ENCODE measurements at regions of chr11 and their contacts with region 1.

Region 1: GRCh38 chr11:6057452-6057851 is 26.9 kb upstream of the OR56A1 start:
- DNase-seq: no peak

Region 2: DNA sequence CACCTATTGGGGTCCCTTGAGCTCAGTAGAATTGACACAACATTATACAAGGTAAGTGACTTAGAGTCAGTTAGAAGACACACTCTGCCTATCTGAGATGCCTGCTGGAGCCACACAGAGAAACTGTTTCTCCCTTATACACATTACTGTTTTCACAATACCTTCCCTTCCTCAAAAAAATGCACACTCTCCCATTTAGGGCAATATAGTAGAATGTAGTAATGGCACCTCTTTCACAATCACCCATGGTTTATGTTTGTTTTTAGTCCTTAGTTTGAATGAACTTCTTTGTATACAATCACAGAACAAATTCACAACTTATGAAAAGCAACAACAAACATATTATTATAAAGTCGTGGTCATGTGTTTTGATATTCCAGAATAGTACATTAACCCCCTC is 523.4 kb before region 1 on chr11:
- intact Hi-C with region 1: no loop called
- DNase-seq: no peak

Region 3: DNA sequence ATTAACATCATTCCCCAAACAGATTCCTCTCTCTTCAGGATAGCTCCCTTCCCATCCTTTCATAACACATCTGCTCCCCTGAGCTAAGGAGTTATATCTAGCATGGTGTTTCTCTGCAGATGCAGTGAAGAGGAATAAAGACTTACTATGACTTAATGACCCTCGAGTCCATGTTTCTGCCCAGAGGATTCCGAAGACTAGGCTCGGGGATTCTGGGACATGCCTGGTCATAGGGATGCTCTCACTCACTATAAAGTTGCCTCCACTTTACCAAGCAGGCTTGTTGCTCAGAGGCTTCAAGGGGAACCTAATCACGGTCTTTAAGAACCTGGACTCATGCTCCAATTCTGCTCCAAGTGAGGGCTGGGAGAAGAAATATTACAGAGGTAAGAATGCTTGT is 177.1 kb before region 1 on chr11 and contains the start of gene OR52E4:
- intact Hi-C with region 1: loop called (anchors 5 kb)
- DNase-seq: no peak
- total RNA-seq, gene OR52E4: not detected

Region 4: DNA sequence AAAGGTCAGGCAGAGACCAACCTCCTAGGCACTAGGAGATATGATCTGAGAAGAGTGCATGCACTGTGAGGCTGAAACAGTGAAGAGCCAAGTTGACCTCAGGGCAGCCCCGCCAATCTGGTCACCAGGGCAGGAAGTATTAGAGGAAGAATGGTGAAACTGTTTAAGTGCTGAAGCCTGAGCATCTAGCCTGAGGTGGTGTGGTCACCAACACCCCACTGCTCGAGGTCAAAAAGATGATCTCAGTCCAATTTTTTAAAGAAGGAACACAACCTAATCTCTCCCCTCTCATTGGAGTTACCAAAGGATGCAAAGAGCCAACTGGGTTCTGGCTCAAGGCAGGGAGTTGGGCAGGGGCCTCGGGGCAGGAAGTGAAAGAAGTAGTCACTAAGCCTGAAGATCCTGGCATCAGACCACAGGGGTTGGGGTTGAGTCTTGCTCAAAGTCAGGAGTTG is 357.4 kb after region 1 on chr11:
- intact Hi-C with region 1: no loop called
- DNase-seq: no peak